ENCODE measurements at regions of chr4 and their contacts with region 1.

Region 1: DNA sequence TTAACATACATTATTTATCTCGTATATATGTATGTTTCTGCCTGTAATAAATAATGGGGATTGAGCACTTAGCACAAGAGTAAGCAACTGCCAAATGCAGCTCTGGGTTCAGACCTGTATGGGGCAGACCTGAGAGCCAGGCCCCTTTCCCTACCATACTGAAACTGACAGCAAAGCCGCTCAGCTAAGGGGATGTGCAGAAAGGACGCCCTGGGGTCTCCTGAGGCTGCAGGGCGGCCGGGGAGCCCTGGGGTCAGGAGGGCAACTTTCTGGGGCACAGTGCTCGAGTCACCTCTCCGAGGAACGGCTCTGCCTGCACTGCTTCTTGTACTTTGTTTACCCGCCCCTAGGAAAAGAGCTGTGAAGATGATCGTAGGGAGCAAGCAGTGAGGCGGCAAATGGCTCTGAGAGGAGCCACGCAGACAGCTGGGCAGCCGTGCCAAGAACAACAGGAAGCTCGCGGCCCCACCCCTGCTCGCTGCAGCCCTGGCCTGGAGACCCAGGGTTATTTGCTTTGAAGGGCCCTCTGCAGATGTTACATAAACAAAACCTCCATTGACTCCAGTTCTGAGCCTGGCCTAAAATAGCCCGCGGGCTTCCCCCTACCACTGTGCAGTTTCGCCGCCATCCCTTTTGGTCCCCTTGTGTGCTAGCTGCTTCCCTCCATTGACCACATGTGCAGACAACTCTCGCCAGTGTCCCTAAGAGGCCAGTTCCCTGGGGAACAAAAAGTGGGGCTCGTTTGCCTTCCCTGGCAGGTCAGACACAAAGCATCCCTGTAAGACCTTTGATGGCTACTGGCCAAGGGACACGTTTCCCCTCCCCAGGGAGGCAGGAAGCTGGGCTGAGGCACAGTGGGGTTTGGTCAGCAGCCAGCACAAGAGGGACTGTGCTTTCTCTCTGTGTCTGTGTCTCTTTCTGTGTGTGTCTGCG is 111.3 kb upstream of the LNX1 start:
- DNase-seq: peak; percentile 87 to 88
- ATAC-seq: peak; percentile 93 to 97 (median 95)
- H3K4me3 ChIP-seq: peak overlapping the region in 9 of 10 donors; percentile 14 to 46 (median 36)
- H3K27ac ChIP-seq: peak overlapping the region; percentile 36 to 85 (median 72)
- H3K4me1 ChIP-seq: peaks cover 8 to 45% (median 33%) of the 10 kb centered on the region in 9 donors
- H3K27me3 ChIP-seq: no peaks in the 10 kb centered on the region
- CTCF ChIP-seq: peak in 3 of 9 donors; percentile 14 to 23 (median 20)

Region 2: GRCh38 chr4:53196882-53197771 is 505.5 kb before region 1 on chr4:
- intact Hi-C with region 1: loop called in 1 of 10 experiments (anchors 10 kb)
- DNase-seq: no peak
- ATAC-seq: peak in 6 of 8 donors; percentile 56 to 75 (median 61)
- H3K4me3 ChIP-seq: no peak overlapping the region
- H3K27ac ChIP-seq: peak overlapping the region in 1 of 10 donors; percentile 37
- H3K4me1 ChIP-seq: peaks cover 0 to 16% (median 4%) of the 10 kb centered on the region in 9 donors
- H3K27me3 ChIP-seq: no peaks in the 10 kb centered on the region
- CTCF ChIP-seq: peak; percentile 65 to 85 (median 79)

Region 3: GRCh38 chr4:53507671-53508286 is 194.8 kb before region 1 on chr4:
- intact Hi-C with region 1: loop called in 1 of 10 experiments (anchors 5 kb)
- DNase-seq: peak; percentile 72 to 74
- ATAC-seq: peak; percentile 83 to 95 (median 90)
- H3K4me3 ChIP-seq: peak overlapping the region in 7 of 10 donors; percentile 13 to 42 (median 35)
- H3K27ac ChIP-seq: peak overlapping the region; percentile 24 to 78 (median 72)
- H3K4me1 ChIP-seq: peaks cover 0 to 28% (median 9%) of the 10 kb centered on the region in 9 donors
- H3K27me3 ChIP-seq: no peaks in the 10 kb centered on the region
- CTCF ChIP-seq: no peak

Region 4: GRCh38 chr4:53640576-53641453 is 61.8 kb before region 1 on chr4:
- intact Hi-C with region 1: no loop called
- DNase-seq: no peak
- ATAC-seq: peak in 2 of 8 donors; percentile 24 to 27
- H3K4me3 ChIP-seq: no peak overlapping the region
- H3K27ac ChIP-seq: peak overlapping the region in 1 of 10 donors; percentile 7
- H3K4me1 ChIP-seq: peaks cover 4 to 34% (median 13%) of the 10 kb centered on the region in 9 donors
- H3K27me3 ChIP-seq: no peaks in the 10 kb centered on the region
- CTCF ChIP-seq: no peak

Region 5: DNA sequence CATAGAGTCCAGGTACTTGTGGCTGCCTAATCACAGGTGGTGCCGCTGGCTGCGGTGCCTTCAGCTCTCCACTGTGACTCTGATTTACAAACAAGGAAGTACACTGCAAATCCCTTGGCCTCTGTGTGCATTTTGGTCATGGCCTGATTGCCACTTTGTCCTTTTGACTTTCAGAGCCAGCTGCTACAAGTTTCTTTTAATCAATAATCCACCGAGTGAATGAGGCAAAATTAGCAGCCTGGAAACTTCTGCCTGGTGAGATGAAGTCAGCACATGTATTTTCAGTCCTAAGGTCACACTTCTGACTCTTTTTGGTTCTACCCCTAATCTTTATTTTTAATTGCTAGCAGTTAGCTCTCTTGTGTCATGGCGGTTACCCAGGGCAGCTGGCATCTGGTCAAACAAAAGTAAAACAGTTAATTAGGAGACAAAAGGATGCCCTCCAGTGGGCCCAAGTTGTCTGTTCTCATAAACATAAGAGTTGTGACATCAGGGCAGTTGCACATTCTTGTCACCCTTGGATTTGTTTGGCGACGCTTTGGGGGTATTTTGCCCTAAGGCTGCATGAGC is 49.0 kb before region 1 on chr4:
- intact Hi-C with region 1: loop called in 1 of 10 experiments (anchors 2 kb)
- DNase-seq: no peak
- ATAC-seq: peak in 4 of 8 donors; percentile 38 to 49 (median 46)
- H3K4me3 ChIP-seq: no peak overlapping the region
- H3K27ac ChIP-seq: peak overlapping the region in 4 of 10 donors; percentile 15 to 80 (median 44)
- H3K4me1 ChIP-seq: peaks cover 0 to 58% (median 20%) of the 10 kb centered on the region in 9 donors
- H3K27me3 ChIP-seq: no peaks in the 10 kb centered on the region
- CTCF ChIP-seq: peak in 6 of 9 donors; percentile 7 to 32 (median 18)

Region 6: GRCh38 chr4:54217642-54218495 is 515.3 kb after region 1 on chr4:
- intact Hi-C with region 1: loop called in 4 of 10 experiments (anchors 5 to 10 kb)
- DNase-seq: peak; percentile 50 to 84
- ATAC-seq: peak; percentile 89 to 95 (median 91)
- H3K4me3 ChIP-seq: peak overlapping the region in 9 of 10 donors; percentile 3 to 52 (median 48)
- H3K27ac ChIP-seq: peak overlapping the region in 2 of 10 donors; percentile 7 to 67
- H3K4me1 ChIP-seq: peaks cover 0 to 19% (median 10%) of the 10 kb centered on the region in 9 donors
- H3K27me3 ChIP-seq: peaks cover 0 to 40% (median 29%) of the 10 kb centered on the region in 7 donors
- CTCF ChIP-seq: peak; percentile 84 to 97 (median 93)

Measured in heart right ventricle (tissue), 16 donors.